ENCODE measurements at regions of chr6 and their contacts with region 1.

Region 1: GRCh38 chr6:134882426-134883038 is 67.4 kb downstream of the ALDH8A1 start:
- DNase-seq: peak; percentile 82
- H3K4me3 ChIP-seq: no peak overlapping the region
- H3K27ac ChIP-seq: no peak overlapping the region
- H3K4me1 ChIP-seq: no peaks in the 10 kb centered on the region
- H3K27me3 ChIP-seq: no peaks in the 10 kb centered on the region
- CTCF ChIP-seq: peak; percentile 92 to 96 (median 96)
- POLR2A ChIP-seq: no peak

Region 2: GRCh38 chr6:134152767-134153485 is 729.6 kb before region 1 on chr6:
- intact Hi-C with region 1: loop called (anchors 5 kb)
- DNase-seq: peak; percentile 73
- H3K4me3 ChIP-seq: no peak overlapping the region
- H3K27ac ChIP-seq: no peak overlapping the region
- H3K4me1 ChIP-seq: peaks cover 4% of the 10 kb centered on the region
- H3K27me3 ChIP-seq: no peaks in the 10 kb centered on the region
- CTCF ChIP-seq: no peak
- POLR2A ChIP-seq: no peak